Left colon (tissue), 2 donors: ENCODE measurements at regions of chr13 and their contacts with region 1.

Region 1: GRCh38 chr13:78137404-78138142 is 218.9 kb upstream of the EDNRB start:
- DNase-seq: no peak
- ATAC-seq: peak; percentile 76

Region 2: DNA sequence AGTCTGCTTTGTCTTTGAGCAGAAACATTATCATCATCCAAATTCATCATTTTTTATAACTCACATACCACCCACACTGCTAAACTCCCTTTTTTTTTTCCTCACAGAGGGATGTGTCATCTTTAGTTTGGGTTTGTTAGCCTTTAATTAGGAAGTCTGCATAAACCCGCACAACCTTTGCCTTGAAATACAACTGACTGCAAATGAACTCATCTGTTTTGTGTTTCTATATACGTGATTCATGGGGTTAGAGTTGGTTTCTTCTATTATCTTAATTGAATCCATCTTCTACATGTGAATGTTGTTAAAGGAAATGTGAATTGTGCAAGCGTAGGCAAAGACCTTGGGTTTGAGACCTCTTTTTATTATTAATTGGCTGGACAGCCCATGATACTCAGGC is 337.4 kb before region 1 on chr13:
- intact Hi-C with region 1: no loop called
- DNase-seq: no peak
- ATAC-seq: no peak

Region 3: DNA sequence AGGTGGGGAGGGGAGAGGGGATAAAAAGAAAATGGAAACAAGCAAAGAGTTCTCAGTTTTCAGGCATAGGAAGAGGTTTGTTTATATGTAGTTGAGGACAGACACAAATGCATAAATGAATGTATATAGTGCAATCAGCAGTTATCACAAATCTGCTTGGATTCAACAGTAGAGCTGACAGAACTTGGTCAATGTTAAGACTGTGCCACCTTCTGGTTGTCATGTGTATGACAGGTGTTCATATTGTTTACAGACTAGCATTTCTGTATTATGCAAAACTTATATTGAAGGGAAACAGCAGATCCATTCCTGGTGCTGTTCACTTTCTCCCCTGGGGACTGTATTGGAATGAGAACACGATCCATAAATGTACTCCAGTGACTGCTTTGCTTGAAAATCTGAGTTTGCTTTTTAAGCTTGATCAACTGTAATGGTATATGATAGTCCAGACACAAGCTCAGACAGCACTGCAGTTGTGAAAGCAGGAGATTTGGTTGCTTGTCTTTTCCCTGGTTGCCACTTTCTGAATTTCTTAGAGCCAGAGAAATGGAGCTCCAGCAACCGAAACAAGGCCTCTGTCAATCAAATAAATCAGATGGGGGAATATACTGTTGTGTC is 840.9 kb after region 1 on chr13:
- intact Hi-C with region 1: loop called in 1 of 2 experiments (anchors 5 kb)
- DNase-seq: peak in 1 of 2 donors; percentile 20
- ATAC-seq: peak; percentile 73